Calu3 (cell line): ENCODE measurements at regions of chr18 and their contacts with region 1.

Region 1: GRCh38 chr18:49768051-49768391 is 45.3 kb downstream of the ACAA2 start:
- DNase-seq: peak; percentile 75
- H3K4me3 Mint-ChIP-seq: no peak overlapping the region
- H3K27ac Mint-ChIP-seq: no peak overlapping the region
- H3K4me1 Mint-ChIP-seq: peaks cover 11% of the 10 kb centered on the region
- H3K27me3 Mint-ChIP-seq: no peaks in the 10 kb centered on the region
- CTCF ChIP-seq: peak; percentile 72

Region 2: DNA sequence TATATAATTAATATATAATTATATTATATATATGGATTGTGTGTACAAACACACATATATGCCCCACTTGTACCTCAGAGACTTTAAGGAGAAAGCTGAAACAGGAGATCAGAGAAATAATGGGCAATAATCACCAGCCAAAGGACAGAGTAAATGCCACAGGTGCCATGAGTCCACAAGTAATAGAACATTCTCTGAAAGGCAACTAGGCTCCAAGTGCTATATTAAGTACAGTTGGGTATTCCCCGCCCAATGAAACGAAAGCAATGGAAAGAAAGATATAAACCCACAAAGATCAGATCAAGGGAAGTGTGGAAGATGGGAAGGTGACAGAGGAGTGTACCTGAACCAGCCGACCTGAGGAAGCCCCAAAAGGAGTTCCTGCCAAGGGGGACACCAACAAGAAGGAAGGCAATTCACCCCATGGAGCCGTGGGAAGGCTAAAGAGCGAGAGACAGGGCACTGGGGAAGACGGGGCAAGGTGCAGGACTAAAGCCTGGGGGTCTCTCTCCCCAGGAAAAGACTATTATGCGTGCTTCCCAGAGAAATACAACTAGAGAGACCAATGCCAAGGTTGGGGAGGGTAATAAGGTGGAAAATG is 326.6 kb before region 1 on chr18:
- CTCF ChIA-PET with region 1: no interaction called
- intact Hi-C with region 1: no loop called
- DNase-seq: no peak
- H3K4me3 Mint-ChIP-seq: no peak overlapping the region
- H3K27ac Mint-ChIP-seq: no peak overlapping the region
- H3K4me1 Mint-ChIP-seq: no peaks in the 10 kb centered on the region
- H3K27me3 Mint-ChIP-seq: no peaks in the 10 kb centered on the region
- CTCF ChIP-seq: no peak

Region 3: DNA sequence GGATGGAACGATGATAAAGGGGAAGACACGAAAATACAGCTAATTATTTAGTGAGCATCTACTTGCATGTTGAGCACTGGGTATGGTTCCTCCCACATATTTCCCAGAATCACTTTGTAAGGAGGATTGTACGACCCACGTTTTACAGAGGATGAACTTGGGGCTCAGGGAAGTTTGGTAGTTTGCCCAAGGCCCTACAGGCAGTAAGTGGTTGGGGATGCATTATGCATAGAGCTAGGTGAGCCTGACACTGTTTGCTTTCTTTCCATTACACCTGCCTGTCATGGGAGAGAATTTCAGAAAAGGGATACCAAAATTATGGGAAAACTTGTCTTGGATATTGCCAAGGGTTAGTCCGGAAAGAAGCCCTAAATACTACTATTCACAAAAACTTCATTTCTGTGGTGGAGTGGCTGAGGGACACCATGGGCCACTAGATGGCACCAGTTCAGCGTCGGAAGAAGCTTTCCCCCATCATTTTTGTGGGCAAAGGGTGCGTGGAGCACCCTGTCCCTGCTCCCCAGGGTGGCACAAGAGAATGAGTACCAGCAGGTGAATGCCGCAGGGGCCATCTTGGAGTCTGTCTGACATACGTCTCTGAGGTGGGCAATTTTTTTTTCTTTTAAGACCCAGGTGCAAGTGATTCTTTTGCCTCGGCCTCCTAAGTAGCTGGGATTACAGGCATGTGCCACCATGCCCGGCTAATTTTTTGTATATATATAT is 257.5 kb before region 1 on chr18:
- CTCF ChIA-PET with region 1: no interaction called
- intact Hi-C with region 1: loop called (anchors 1 kb)
- DNase-seq: peak; percentile 72
- H3K4me3 Mint-ChIP-seq: no peak overlapping the region
- H3K27ac Mint-ChIP-seq: no peak overlapping the region
- H3K4me1 Mint-ChIP-seq: no peaks in the 10 kb centered on the region
- H3K27me3 Mint-ChIP-seq: peaks cover 25% of the 10 kb centered on the region
- CTCF ChIP-seq: peak; percentile 87

Region 4: DNA sequence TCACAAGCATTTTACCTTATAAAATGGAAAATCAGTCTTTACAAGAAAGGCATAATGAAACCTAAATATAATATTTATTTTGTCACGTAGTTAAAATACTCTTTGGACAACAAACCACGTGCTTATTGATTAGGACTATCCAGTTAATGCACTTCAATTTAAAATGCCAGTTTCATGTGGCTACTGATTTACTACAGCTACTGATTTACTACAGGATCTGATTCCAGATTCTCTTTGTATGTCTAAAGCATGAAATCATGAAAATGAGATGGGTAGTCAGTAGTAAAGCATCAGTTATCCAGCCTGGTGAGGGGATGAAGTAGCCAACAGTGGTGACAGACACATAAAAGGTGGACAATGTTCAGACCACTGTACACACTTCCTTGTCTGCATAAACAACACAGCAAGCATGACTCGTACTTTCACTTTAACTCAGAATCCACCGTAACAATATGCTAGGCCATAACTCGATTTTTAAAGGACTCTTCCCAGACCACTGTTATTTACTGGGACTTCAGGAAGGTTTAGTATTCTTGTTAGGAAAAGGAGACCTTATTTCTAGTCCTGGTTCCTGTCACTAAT is 20.4 kb after region 1 on chr18:
- CTCF ChIA-PET with region 1: no interaction called
- intact Hi-C with region 1: no loop called
- DNase-seq: no peak
- H3K4me3 Mint-ChIP-seq: peak overlapping the region; percentile 37
- H3K27ac Mint-ChIP-seq: peak overlapping the region; percentile 47
- H3K4me1 Mint-ChIP-seq: peaks cover 16% of the 10 kb centered on the region
- H3K27me3 Mint-ChIP-seq: no peaks in the 10 kb centered on the region
- CTCF ChIP-seq: no peak